ENCODE measurements at regions of chr3 and their contacts with region 1.

Region 1: DNA sequence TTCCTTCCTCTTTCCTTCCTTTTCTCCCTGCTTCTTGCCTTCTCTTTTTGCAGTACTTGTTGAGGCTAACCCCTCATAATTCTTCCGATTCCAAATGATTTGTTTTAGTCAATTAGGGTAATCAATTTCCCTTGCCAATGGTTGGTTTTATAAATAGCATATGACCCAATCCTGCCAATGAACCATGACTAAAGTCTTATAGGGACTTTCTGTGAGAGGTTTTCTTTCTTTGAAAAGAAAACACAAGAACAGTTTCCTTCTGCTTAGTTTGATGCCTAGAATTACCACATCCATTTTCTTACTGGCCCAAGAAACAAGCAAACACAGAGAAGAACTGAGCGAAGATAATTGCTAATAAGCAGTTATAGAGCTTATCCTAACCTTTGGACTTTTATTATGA is 292.5 kb upstream of the SATB1 start:
- DNase-seq: no peak
- ATAC-seq: peak; percentile 54
- H3K4me3 Mint-ChIP-seq: no peak overlapping the region
- H3K27ac Mint-ChIP-seq: peak overlapping the region; percentile 73
- H3K4me1 Mint-ChIP-seq: peaks cover 25% of the 10 kb centered on the region
- H3K27me3 Mint-ChIP-seq: no peaks in the 10 kb centered on the region
- CTCF ChIP-seq: no peak

Region 2: GRCh38 chr3:18740631-18741583 is 23.3 kb after region 1 on chr3:
- CTCF ChIA-PET with region 1: no interaction called
- POLR2A ChIA-PET with region 1: no interaction called
- intact Hi-C with region 1: loop called (anchors 1 kb)
- DNase-seq: no peak
- ATAC-seq: peak; percentile 73
- H3K4me3 Mint-ChIP-seq: peak overlapping the region; percentile 73
- H3K27ac Mint-ChIP-seq: peak overlapping the region; percentile 88
- H3K4me1 Mint-ChIP-seq: peaks cover 68% of the 10 kb centered on the region
- H3K27me3 Mint-ChIP-seq: no peaks in the 10 kb centered on the region
- CTCF ChIP-seq: no peak

Region 3: GRCh38 chr3:19124746-19125145 is 407.1 kb after region 1 on chr3:
- CTCF ChIA-PET with region 1: no interaction called
- POLR2A ChIA-PET with region 1: no interaction called
- intact Hi-C with region 1: no loop called
- DNase-seq: no peak
- ATAC-seq: no peak
- H3K4me3 Mint-ChIP-seq: no peak overlapping the region
- H3K27ac Mint-ChIP-seq: no peak overlapping the region
- H3K4me1 Mint-ChIP-seq: no peaks in the 10 kb centered on the region
- H3K27me3 Mint-ChIP-seq: no peaks in the 10 kb centered on the region
- CTCF ChIP-seq: no peak

Measured in activated B cell treated with CpG ODN at 0.5 μM for 24 hours (primary cell).